Naive thymus-derived CD4-positive, alpha-beta T cell (primary cell): ENCODE measurements at regions of chr22 and their contacts with region 1.

Region 1: GRCh38 chr22:38705235-38706100 is at the start of gene GTPBP1:
- DNase-seq: peak; percentile 76 to 100 (median 99)
- ATAC-seq: peak; percentile 85
- H3K4me3 ChIP-seq: peak within 1 kb of the TSS; percentile 80
- H3K4me3 Mint-ChIP-seq: peak within 1 kb of the TSS; percentile 71 to 98 (median 93)
- H3K27ac ChIP-seq: peak within 1 kb of the TSS; percentile 90
- H3K27ac Mint-ChIP-seq: peak within 1 kb of the TSS; percentile 80 to 99 (median 98)
- H3K4me1 ChIP-seq: peaks cover 36 to 42% of the 10 kb centered on the region in 2 donors
- H3K4me1 Mint-ChIP-seq: peaks cover 36 to 60% (median 59%) of the 10 kb centered on the region in 7 donors
- H3K27me3 ChIP-seq: no peaks in the 10 kb centered on the region
- H3K27me3 Mint-ChIP-seq: no peaks in the 10 kb centered on the region
- total RNA-seq, gene GTPBP1: 79.1 to 209 (median 91.9) TPM

Region 2: DNA sequence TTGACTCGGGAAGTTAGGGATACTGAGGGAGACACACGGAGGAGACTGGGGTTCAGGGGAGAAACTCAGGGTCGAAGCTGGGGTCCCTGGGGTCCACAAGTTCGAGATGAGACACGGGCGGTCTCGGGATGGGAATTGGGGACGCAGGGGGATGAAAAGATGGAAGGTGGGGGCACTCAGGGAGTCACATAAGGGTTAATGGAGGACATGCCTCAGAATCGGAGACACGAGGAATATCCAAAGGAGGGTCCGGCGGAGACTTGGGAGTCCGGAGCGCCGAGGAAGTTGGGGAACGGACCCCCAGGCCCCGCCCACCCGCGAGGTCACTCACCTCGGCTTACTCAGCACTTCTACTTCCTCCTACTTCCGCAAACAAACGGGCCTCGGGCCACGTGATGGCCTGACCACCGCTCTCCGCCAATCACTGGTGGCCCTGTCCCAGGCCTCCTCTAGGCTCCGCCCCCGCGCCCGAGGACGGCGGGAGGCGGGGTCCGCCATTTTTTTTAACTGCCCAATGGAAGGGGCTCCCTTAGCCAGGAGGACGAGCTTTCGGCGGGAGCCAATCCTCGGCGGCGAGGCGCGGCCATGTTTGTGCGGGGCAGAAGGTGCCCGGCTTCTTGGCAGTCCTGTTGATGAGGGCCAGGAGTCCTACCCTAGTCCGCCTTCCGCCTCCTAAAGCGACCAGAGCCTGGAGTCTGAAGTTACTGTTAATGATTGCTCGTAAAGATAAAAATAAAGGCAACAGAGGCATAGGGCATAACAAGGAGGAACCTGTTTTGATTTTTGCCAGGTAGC is 523.8 kb before region 1 on chr22 and contains the start of gene PLA2G6:
- CTCF ChIA-PET with region 1: no interaction called
- POLR2A ChIA-PET with region 1: no interaction called
- intact Hi-C with region 1: loop called in 1 of 2 experiments (anchors 2 kb)
- DNase-seq: peak; percentile 86 to 99 (median 90)
- ATAC-seq: peak; percentile 96
- H3K4me3 ChIP-seq: peak within 1 kb of the TSS; percentile 90
- H3K4me3 Mint-ChIP-seq: peak within 1 kb of the TSS; percentile 88 to 100 (median 94)
- H3K27ac ChIP-seq: peak within 1 kb of the TSS; percentile 67
- H3K27ac Mint-ChIP-seq: peak within 1 kb of the TSS; percentile 36 to 94 (median 89)
- H3K4me1 ChIP-seq: peaks cover 16 to 30% of the 10 kb centered on the region in 2 donors
- H3K4me1 Mint-ChIP-seq: peaks cover 34 to 50% (median 42%) of the 10 kb centered on the region in 7 donors
- H3K27me3 ChIP-seq: no peaks in the 10 kb centered on the region
- H3K27me3 Mint-ChIP-seq: peaks cover 0 to 14% (median 0%) of the 10 kb centered on the region in 5 donors
- total RNA-seq, gene PLA2G6: 66.5 to 252 (median 105) TPM

Region 3: GRCh38 chr22:38461414-38462081 is 243.9 kb before region 1 on chr22:
- CTCF ChIA-PET with region 1: no interaction called
- POLR2A ChIA-PET with region 1: no interaction called
- intact Hi-C with region 1: no loop called
- DNase-seq: peak in 7 of 9 donors; percentile 28 to 68 (median 32)
- ATAC-seq: peak; percentile 70
- H3K4me3 ChIP-seq: no peak overlapping the region
- H3K4me3 Mint-ChIP-seq: peak overlapping the region in 4 of 10 donors; percentile 24 to 47 (median 28)
- H3K27ac ChIP-seq: no peak overlapping the region
- H3K27ac Mint-ChIP-seq: no peak overlapping the region
- H3K4me1 ChIP-seq: peaks cover 0 to 8% of the 10 kb centered on the region in 2 donors
- H3K4me1 Mint-ChIP-seq: peaks cover 3 to 17% (median 11%) of the 10 kb centered on the region in 7 donors
- H3K27me3 ChIP-seq: peaks cover 3 to 8% of the 10 kb centered on the region in 2 donors
- H3K27me3 Mint-ChIP-seq: peaks cover 51 to 91% (median 71%) of the 10 kb centered on the region in 5 donors

Region 4: DNA sequence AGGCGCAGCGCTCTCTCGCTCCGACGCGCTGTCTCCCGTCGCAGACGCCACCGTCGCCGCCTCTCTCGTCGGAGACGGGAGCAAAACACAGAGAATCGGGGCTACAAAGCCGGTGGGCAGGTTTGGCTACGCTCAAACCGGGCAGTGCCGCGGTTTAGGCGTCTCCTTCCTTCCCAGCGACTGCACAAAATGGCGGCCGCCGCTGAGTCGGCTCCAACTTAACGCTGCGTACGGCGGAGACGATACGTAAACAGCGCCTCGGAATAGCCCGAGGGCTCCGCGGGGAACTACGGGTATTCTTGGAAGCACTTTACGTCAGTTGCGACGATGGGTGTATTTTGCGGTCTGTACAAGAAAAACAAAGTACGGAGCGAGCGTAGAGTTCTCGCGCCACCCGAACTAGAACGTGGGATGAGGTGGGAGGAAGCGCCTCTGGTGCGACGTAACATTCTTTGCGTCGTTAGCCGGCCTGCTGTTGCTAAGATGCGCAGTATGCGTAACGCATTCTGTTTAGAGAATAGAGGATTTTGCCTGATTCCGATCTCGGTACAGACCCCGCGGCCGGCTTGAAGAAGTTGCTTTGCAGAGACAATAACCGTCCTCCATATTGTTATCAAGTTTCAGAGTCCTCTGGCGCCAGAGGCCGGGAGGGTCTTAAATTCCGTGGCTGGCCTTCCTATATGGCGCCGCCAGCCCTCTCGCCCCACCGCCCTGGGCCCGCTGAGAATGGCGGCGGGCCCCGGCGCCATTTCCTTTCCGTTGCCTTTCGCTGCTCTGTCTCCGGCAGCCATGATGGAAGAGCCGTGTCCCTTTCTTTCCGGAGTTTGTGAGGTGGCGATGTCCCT is 199.1 kb before region 1 on chr22 and contains the start of gene DDX17:
- CTCF ChIA-PET with region 1: no interaction called
- POLR2A ChIA-PET with region 1: no interaction called
- intact Hi-C with region 1: loop called in 1 of 2 experiments (anchors 1 kb)
- DNase-seq: peak; percentile 89 to 99 (median 96)
- ATAC-seq: peak; percentile 94
- H3K4me3 ChIP-seq: peak within 1 kb of the TSS; percentile 88
- H3K4me3 Mint-ChIP-seq: peak within 1 kb of the TSS; percentile 92 to 100 (median 99)
- H3K27ac ChIP-seq: peak within 1 kb of the TSS; percentile 100
- H3K27ac Mint-ChIP-seq: peak within 1 kb of the TSS; percentile 100
- H3K4me1 ChIP-seq: peaks cover 35 to 37% of the 10 kb centered on the region in 2 donors
- H3K4me1 Mint-ChIP-seq: peaks cover 39 to 57% (median 48%) of the 10 kb centered on the region in 7 donors
- H3K27me3 ChIP-seq: no peaks in the 10 kb centered on the region
- H3K27me3 Mint-ChIP-seq: peaks cover 0 to 4% (median 0%) of the 10 kb centered on the region in 5 donors
- total RNA-seq, gene DDX17: 478 to 1,097 (median 684) TPM

Region 5: DNA sequence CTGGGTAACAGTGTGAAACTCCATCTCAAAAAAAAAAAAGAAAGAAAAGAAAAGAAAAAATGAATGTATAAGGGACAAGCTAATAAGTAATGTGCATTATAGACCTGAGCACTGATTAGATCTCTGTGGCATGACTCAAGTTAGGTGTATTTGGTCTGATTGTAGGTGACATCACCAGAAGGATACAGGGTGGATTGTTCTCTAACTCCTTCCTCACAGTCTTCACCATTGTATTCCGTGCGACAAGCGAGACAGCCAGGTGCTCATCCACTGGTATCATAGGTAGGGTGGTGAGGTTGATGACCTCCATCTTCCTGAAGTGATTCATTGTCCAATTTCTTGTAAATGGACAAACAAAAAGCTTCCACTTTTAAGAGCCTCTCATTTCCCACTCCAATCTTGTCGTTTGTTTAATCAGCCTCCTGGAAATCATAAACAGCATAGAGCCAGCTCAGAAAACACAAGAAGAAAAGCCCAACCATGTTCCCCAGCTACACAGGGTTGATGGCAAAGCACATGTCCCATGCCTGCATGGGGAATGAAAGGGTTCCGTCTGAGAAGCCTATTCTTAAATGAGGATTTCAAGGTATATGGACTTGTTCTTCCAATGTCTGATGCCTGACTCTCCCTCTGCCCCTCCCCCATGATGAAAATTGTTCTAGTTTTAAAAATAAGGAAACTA is 55.5 kb before region 1 on chr22:
- CTCF ChIA-PET with region 1: no interaction called
- POLR2A ChIA-PET with region 1: no interaction called
- intact Hi-C with region 1: no loop called
- DNase-seq: no peak
- ATAC-seq: no peak
- H3K4me3 ChIP-seq: no peak overlapping the region
- H3K4me3 Mint-ChIP-seq: no peak overlapping the region
- H3K27ac ChIP-seq: no peak overlapping the region
- H3K27ac Mint-ChIP-seq: no peak overlapping the region
- H3K4me1 ChIP-seq: no peaks in the 10 kb centered on the region
- H3K4me1 Mint-ChIP-seq: peaks cover 0 to 4% (median 0%) of the 10 kb centered on the region in 7 donors
- H3K27me3 ChIP-seq: no peaks in the 10 kb centered on the region
- H3K27me3 Mint-ChIP-seq: peaks cover 0 to 4% (median 0%) of the 10 kb centered on the region in 5 donors

Region 6: GRCh38 chr22:38724926-38725571 is 19.6 kb after region 1 on chr22:
- CTCF ChIA-PET with region 1: interaction called, 4 read pairs
- POLR2A ChIA-PET with region 1: interaction called, 11 read pairs
- intact Hi-C with region 1: loop called in 1 of 2 experiments (anchors 2 kb)
- DNase-seq: peak in 7 of 9 donors; percentile 33 to 63 (median 50)
- ATAC-seq: peak; percentile 86
- H3K4me3 ChIP-seq: no peak overlapping the region
- H3K4me3 Mint-ChIP-seq: peak overlapping the region in 1 of 10 donors; percentile 15
- H3K27ac ChIP-seq: peak overlapping the region; percentile 8
- H3K27ac Mint-ChIP-seq: peak overlapping the region in 8 of 9 donors; percentile 50 to 91 (median 76)
- H3K4me1 ChIP-seq: no peaks in the 10 kb centered on the region
- H3K4me1 Mint-ChIP-seq: peaks cover 5 to 25% (median 11%) of the 10 kb centered on the region in 7 donors
- H3K27me3 ChIP-seq: no peaks in the 10 kb centered on the region
- H3K27me3 Mint-ChIP-seq: no peaks in the 10 kb centered on the region

Region 7: DNA sequence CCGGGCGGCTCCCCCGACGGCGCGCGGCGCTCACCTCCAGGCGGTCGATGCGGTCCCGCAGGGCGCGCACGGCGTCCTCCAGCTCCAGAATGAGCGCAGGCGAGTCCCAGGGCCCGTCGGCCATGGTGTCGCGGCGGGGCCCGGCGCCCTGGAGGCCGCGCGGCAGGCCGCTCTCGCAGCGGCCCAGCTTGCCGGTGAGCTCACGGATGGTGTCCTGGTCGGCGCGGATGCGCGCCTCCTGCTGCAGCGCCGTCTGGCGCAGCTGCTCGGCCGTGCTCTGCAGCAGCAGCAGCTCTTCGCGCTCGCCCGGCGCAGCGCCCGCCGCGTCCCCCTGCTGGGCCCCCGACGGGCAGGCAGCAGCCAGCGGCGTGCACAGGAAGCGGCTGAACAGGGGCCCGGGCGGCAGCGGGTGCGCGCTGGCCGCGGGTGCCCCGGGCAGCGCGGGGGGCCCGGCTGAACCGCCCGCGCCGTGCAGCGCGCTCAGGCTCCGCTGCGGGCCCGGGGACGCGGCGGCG is 137.8 kb after region 1 on chr22:
- CTCF ChIA-PET with region 1: no interaction called
- POLR2A ChIA-PET with region 1: interaction called, 4 read pairs
- intact Hi-C with region 1: loop called in 1 of 2 experiments (anchors 1 kb)
- DNase-seq: peak; percentile 35 to 67 (median 61)
- ATAC-seq: peak; percentile 89
- H3K4me3 ChIP-seq: peak overlapping the region; percentile 50
- H3K4me3 Mint-ChIP-seq: peak overlapping the region in 4 of 10 donors; percentile 37 to 90 (median 74)
- H3K27ac ChIP-seq: no peak overlapping the region
- H3K27ac Mint-ChIP-seq: peak overlapping the region in 1 of 9 donors; percentile 62
- H3K4me1 ChIP-seq: peaks cover 0 to 14% of the 10 kb centered on the region in 2 donors
- H3K4me1 Mint-ChIP-seq: peaks cover 9 to 40% (median 35%) of the 10 kb centered on the region in 7 donors
- H3K27me3 ChIP-seq: no peaks in the 10 kb centered on the region
- H3K27me3 Mint-ChIP-seq: peaks cover 0 to 69% (median 0%) of the 10 kb centered on the region in 5 donors

Region 8: DNA sequence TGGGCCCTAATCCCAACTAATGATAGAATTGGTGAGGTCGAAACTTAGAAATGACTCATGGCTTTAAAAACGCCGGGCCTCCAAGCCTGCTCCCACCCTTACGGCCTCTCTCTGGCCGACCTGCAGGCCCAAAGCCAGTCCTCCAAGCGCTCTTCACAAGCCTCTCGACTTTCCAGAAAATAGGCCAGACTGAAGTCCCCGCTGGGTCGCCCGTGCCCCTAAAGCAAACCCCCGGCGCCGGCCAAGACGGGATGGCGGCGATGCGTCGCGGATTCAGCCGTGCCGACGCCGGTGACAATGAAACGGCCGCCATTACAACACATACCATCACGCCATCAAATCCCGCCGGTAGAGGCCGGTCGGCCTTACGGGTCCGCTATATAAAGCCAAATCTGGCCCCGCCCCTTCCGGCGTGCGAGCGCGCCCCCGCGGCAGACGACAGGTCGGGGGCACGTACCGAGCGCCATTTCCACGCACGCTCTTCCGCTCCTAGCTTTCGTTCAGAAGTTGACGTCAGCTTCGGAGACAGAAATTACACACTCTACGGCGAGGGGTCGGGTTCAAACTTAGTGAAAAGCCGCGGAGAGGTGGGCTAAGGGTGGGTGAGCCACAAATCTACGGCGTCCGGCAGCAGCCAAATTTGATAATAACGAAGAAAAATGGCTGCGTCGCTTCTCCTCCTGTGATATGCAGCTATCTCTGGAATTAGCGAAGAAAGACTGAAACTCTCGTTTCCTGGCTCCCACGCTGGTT is 614.0 kb after region 1 on chr22 and contains the start of gene RPL3:
- CTCF ChIA-PET with region 1: no interaction called
- POLR2A ChIA-PET with region 1: interaction called, 3 read pairs
- intact Hi-C with region 1: loop called in 1 of 2 experiments (anchors 1 kb)
- DNase-seq: peak; percentile 97 to 99 (median 98)
- ATAC-seq: peak; percentile 93
- H3K4me3 ChIP-seq: peak within 1 kb of the TSS; percentile 81
- H3K4me3 Mint-ChIP-seq: peak within 1 kb of the TSS; percentile 95 to 100 (median 98)
- H3K27ac ChIP-seq: peak within 1 kb of the TSS; percentile 90
- H3K27ac Mint-ChIP-seq: peak within 1 kb of the TSS; percentile 95 to 99 (median 97)
- H3K4me1 ChIP-seq: peaks cover 34 to 39% of the 10 kb centered on the region in 2 donors
- H3K4me1 Mint-ChIP-seq: peaks cover 27 to 51% (median 35%) of the 10 kb centered on the region in 7 donors
- H3K27me3 ChIP-seq: no peaks in the 10 kb centered on the region
- H3K27me3 Mint-ChIP-seq: peaks cover 0 to 3% (median 0%) of the 10 kb centered on the region in 5 donors
- total RNA-seq, gene RPL3: 1,611 to 3,932 (median 3,789) TPM

Region 9: DNA sequence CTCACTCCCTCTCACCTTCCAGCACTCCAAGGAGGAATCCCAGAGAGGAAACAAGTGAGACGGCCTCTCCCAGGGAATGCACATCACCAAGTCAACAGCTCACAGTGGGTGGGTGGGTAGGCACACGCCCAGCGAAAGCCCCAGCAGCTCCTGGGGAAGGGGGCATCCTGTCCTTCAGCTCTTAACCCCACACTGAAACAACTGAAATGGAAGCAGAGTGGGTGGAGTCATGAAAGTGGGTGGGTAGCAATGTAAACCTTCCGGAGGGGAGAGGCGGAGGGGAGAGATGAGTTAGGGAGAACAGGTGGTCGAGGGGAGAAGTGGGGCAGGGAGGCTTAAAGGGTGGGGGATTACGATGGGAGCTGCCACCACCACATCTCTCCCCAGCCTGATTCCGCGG is 1979.3 kb after region 1 on chr22:
- CTCF ChIA-PET with region 1: no interaction called
- POLR2A ChIA-PET with region 1: no interaction called
- intact Hi-C with region 1: no loop called
- DNase-seq: no peak
- ATAC-seq: no peak
- H3K4me3 ChIP-seq: peak overlapping the region; percentile 60
- H3K4me3 Mint-ChIP-seq: peak overlapping the region in 7 of 10 donors; percentile 71 to 89 (median 83)
- H3K27ac ChIP-seq: peak overlapping the region; percentile 58
- H3K27ac Mint-ChIP-seq: peak overlapping the region in 6 of 9 donors; percentile 68 to 95 (median 84)
- H3K4me1 ChIP-seq: peaks cover 0 to 6% of the 10 kb centered on the region in 2 donors
- H3K4me1 Mint-ChIP-seq: peaks cover 4 to 28% (median 11%) of the 10 kb centered on the region in 7 donors
- H3K27me3 ChIP-seq: no peaks in the 10 kb centered on the region
- H3K27me3 Mint-ChIP-seq: peaks cover 0 to 9% (median 7%) of the 10 kb centered on the region in 5 donors